ENCODE measurements at regions of chr11 and their contacts with region 1.

Region 1: DNA sequence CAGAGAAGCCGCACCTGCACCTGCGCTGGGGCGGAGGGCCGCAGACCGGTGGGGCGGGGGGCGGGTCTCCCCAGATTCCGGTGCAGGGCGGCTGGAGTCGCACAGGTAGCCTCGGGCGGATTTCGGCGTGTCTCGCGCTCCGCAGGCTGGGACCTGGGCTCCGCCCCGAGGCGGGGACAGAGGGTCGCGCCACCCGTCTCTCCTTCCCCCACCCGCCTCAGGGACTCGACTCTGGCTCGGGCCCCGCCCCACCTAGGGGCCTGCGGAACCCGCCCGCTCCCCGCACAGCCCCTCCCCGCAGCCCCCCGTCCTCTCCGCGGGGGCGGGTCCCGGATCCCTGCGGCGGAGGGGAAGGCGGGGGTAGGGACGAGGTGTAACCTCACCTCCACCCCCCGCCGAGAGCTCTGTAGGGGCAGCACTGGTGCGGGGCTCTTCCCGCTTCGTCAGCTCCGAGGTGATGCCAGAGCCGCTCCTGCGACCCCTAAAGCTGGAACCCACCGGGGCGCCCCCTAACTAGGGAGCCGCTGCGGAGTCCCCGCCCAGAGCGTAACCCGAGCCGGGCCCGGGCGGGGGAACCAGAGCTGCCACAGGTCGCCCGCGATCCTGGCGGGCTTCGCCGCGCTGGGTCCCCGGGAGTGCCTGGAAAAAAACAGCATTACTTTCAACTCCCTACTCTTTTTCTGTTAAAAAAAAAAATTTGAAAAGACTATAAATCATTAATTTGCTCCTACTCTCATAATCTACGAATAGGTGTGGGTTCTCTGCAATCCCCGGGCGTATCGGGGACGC is at the start of gene SLC29A2:
- DNase-seq: peak; percentile 79
- H3K4me3 Mint-ChIP-seq: peak within 1 kb of the TSS; percentile 80
- H3K27ac Mint-ChIP-seq: peak within 1 kb of the TSS; percentile 91
- H3K4me1 Mint-ChIP-seq: peaks cover 19% of the 10 kb centered on the region
- H3K27me3 Mint-ChIP-seq: peaks cover 7% of the 10 kb centered on the region
- total RNA-seq, gene SLC29A2: 8.4 to 9.0 TPM

Region 2: DNA sequence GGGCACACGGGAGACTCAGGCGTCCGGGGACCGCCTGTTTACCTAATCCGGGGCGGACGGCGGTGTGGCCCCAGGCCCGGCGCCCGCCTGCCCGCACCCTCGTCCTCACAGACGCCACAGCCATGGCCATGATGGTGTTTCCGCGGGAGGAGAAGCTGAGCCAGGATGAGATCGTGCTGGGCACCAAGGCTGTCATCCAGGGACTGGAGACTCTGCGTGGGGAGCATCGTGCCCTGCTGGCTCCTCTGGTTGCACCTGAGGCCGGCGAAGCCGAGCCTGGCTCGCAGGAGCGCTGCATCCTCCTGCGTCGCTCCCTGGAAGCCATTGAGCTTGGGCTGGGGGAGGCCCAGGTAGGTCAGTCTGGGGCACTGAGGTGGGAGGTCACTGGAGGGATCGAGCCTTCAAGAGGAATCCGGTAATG is 113.3 kb before region 1 on chr11:
- CTCF ChIA-PET with region 1: no interaction called
- POLR2A ChIA-PET with region 1: no interaction called
- DNase-seq: no peak
- H3K4me3 Mint-ChIP-seq: peak overlapping the region; percentile 93
- H3K27ac Mint-ChIP-seq: peak overlapping the region; percentile 99
- H3K4me1 Mint-ChIP-seq: peaks cover 30% of the 10 kb centered on the region
- H3K27me3 Mint-ChIP-seq: no peaks in the 10 kb centered on the region

Region 3: GRCh38 chr11:66344550-66345315 is 27.1 kb before region 1 on chr11 and contains the start of gene BRMS1:
- CTCF ChIA-PET with region 1: interaction called, 5 read pairs
- POLR2A ChIA-PET with region 1: interaction called, 23 read pairs
- DNase-seq: peak; percentile 97
- H3K4me3 Mint-ChIP-seq: peak within 1 kb of the TSS; percentile 96
- H3K27ac Mint-ChIP-seq: peak within 1 kb of the TSS; percentile 87
- H3K4me1 Mint-ChIP-seq: peaks cover 51% of the 10 kb centered on the region
- H3K27me3 Mint-ChIP-seq: no peaks in the 10 kb centered on the region
- total RNA-seq, gene BRMS1: 39.7 to 40.4 TPM

Region 4: GRCh38 chr11:66408488-66409214 is 36.8 kb after region 1 on chr11:
- CTCF ChIA-PET with region 1: no interaction called
- POLR2A ChIA-PET with region 1: no interaction called
- DNase-seq: peak; percentile 91
- H3K4me3 Mint-ChIP-seq: peak overlapping the region; percentile 62
- H3K27ac Mint-ChIP-seq: no peak overlapping the region
- H3K4me1 Mint-ChIP-seq: peaks cover 5% of the 10 kb centered on the region
- H3K27me3 Mint-ChIP-seq: peaks cover 18% of the 10 kb centered on the region

Measured in activated CD4-positive, alpha-beta memory T cell treated with anti-CD3 and anti-CD28 coated beads, Interleukin-2, amount 10 ng/mL, durations not matched to agents 7 days and 5 days (primary cell).